ENCODE measurements at regions of chrX and their contacts with region 1.

Region 1: DNA sequence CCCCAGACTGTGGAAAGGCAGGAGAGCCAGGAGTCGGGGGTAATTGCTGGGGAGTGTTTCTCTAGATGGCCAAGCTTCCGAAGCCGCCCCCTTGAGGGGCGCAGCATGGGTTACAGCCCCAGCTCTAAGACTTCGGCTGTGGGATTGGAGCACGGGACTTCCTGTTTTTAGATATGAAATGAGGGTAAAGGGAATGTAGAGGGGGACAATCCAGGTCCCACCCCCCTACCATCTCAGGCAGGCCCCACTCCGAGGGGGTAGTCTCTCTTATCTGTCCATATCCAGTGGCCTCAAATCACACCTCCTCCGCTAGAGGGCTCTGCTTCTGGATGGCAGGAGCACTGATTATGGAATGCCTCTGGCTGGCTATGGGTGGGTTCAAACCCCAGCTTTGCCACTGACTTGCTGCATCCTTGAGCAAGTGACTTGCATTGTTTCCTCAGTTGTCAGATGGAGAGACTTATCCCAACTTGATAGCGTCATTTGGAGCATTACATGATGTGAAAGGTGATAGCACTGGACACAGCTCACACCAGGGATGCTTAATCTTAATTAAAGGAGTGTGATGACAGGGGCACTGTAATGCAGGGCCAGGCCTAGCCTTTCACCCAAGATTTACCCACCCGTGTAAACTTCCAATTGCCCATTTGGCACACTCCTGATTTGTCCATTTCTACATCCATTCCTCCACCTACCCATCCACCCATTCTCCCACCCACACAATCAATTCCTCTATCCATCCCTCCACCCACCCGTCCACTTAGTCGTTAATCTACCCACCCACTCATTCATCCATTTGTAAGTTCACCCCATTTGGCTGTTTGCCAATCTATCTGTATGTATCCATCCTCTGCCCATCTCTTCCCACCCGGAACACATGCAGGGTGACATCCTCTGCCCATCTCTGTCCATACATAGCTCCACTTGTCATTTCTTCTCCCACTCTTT is 850 bp upstream of the KCND1 start:
- DNase-seq: peak in 7 of 14 experiments; percentile 14 to 59 (median 39)
- ATAC-seq: peak; percentile 48
- H3K4me3 ChIP-seq: peak overlapping the region; percentile 31
- H3K4me3 Mint-ChIP-seq: peak overlapping the region; percentile 20
- H3K27ac ChIP-seq: no peak overlapping the region
- H3K27ac Mint-ChIP-seq: no peak overlapping the region
- H3K4me1 ChIP-seq: peaks cover 16% of the 10 kb centered on the region
- H3K4me1 Mint-ChIP-seq: peaks cover 17% of the 10 kb centered on the region
- H3K27me3 ChIP-seq: no peaks in the 10 kb centered on the region
- H3K27me3 Mint-ChIP-seq: no peaks in the 10 kb centered on the region
- CTCF ChIP-seq: peak; percentile 59

Region 2: DNA sequence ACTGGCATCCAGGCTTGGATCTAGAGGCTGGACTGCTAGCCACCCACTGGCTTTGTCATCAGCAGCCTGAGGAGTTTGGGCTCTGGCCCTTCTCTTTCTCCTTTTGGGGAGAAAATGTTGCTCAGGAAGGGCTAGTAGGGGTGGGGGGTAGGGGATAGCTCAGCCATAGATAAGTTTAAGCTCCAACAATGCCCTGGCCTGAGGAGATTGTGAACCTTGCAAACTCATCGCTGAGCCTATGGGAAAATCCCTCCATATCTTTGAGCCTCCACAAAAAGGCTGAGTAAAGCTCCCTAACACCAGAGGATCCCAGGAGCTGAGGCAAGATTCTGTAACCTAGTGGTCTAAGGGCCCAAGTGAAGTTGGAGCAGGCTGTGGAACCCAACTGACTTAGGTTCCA is 23.9 kb before region 1 on chrX:
- CTCF ChIA-PET with region 1: no interaction called
- POLR2A ChIA-PET with region 1: no interaction called
- intact Hi-C with region 1: no loop called
- DNase-seq: no peak
- ATAC-seq: no peak
- H3K4me3 ChIP-seq: no peak overlapping the region
- H3K4me3 Mint-ChIP-seq: no peak overlapping the region
- H3K27ac ChIP-seq: no peak overlapping the region
- H3K27ac Mint-ChIP-seq: no peak overlapping the region
- H3K4me1 ChIP-seq: peaks cover 71% of the 10 kb centered on the region
- H3K4me1 Mint-ChIP-seq: peaks cover 41% of the 10 kb centered on the region
- H3K27me3 ChIP-seq: no peaks in the 10 kb centered on the region
- H3K27me3 Mint-ChIP-seq: no peaks in the 10 kb centered on the region
- CTCF ChIP-seq: no peak

Region 3: GRCh38 chrX:49002091-49002935 is 29.8 kb after region 1 on chrX and contains the start of gene GRIPAP1:
- CTCF ChIA-PET with region 1: no interaction called
- POLR2A ChIA-PET with region 1: interaction called, 14 read pairs
- intact Hi-C with region 1: no loop called
- DNase-seq: peak; percentile 61 to 93 (median 72)
- ATAC-seq: peak; percentile 77
- H3K4me3 ChIP-seq: peak within 1 kb of the TSS; percentile 93
- H3K4me3 Mint-ChIP-seq: peak within 1 kb of the TSS; percentile 96
- H3K27ac ChIP-seq: peak within 1 kb of the TSS; percentile 84 to 96
- H3K27ac Mint-ChIP-seq: peak within 1 kb of the TSS; percentile 98
- H3K4me1 ChIP-seq: peaks cover 27% of the 10 kb centered on the region
- H3K4me1 Mint-ChIP-seq: peaks cover 26% of the 10 kb centered on the region
- H3K27me3 ChIP-seq: no peaks in the 10 kb centered on the region
- H3K27me3 Mint-ChIP-seq: no peaks in the 10 kb centered on the region
- CTCF ChIP-seq: no peak
- total RNA-seq, gene GRIPAP1: 100 to 101 TPM